Mammary epithelial cell (primary cell): ENCODE measurements at regions of chr4 and their contacts with region 1.

Region 1: GRCh38 chr4:94127707-94128328 is 79.8 kb upstream of the SMARCAD1 start:
- DNase-seq: peak; percentile 19
- H3K4me3 ChIP-seq: no peak overlapping the region
- H3K27ac ChIP-seq: no peak overlapping the region
- H3K4me1 ChIP-seq: no peaks in the 10 kb centered on the region
- H3K27me3 ChIP-seq: no peaks in the 10 kb centered on the region
- CTCF ChIP-seq: peak; percentile 53 to 63

Region 2: DNA sequence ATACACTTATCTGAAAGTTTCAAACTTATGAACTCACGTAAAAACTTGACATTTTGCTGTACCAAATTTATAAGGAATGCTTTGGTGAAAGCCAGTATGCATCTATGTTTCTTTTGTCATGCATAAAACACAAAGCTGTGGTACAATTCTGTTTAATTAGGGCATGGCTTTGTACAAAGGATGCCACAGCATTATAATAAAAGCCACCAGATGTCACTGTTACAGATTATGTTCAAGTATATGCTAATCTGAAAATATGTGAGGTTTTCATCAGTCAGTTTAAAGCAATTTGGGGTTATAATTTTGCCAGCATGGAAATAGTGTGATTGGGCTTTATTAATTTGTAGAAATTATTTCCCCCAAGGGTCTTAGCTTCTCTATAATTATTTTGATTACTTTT is 230.3 kb before region 1 on chr4:
- CTCF ChIA-PET with region 1: no interaction called
- dilution Hi-C with region 1: no loop called
- in situ Hi-C with region 1: no loop called
- intact Hi-C with region 1: loop called (anchors 1 kb)
- DNase-seq: peak; percentile 1
- H3K4me3 ChIP-seq: no peak overlapping the region
- H3K27ac ChIP-seq: no peak overlapping the region
- H3K4me1 ChIP-seq: no peaks in the 10 kb centered on the region
- H3K27me3 ChIP-seq: peaks cover 2% of the 10 kb centered on the region
- CTCF ChIP-seq: peak; percentile 26 to 39